HepG2 (cell line): ENCODE measurements at regions of chr17 and their contacts with region 1.

Region 1: DNA sequence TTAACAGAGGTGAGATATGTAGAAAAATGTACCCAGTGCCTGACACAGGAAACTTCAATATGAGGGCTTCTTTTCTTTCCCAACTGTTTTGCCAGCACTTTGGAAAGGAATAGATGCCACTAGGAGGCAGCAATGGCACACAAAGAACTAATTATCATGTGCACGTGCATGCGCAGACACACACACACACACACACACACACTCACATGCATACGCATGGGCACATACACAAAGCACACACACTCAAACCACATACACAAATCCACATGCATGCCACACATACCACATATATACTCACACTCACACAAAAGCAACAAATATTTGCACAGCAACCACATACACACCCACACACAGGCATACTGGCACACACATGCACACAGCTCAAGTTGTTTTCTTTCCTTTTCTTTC is 8.8 kb upstream of the CEP112 start:
- DNase-seq: peak; percentile 87
- ATAC-seq: peak; percentile 49
- H3K4me3 ChIP-seq: peak overlapping the region in 1 of 3 experiments; percentile 5; a peak in 1 of 6 replicates
- H3K27ac ChIP-seq: no peak overlapping the region
- H3K4me1 ChIP-seq: peaks cover 24% of the 10 kb centered on the region
- H3K27me3 ChIP-seq: no peaks in the 10 kb centered on the region
- CTCF ChIP-seq: peak; percentile 99
- EP300 ChIP-seq: no peak
- POLR2A ChIP-seq: no peak
- RAD21 ChIP-seq: peak; percentile 94

Region 2: GRCh38 chr17:66255112-66255511 is 54.4 kb after region 1 on chr17:
- CTCF ChIA-PET with region 1: interaction called, 3 read pairs
- POLR2A ChIA-PET with region 1: no interaction called
- in situ Hi-C with region 1: no loop called
- intact Hi-C with region 1: loop called (anchors 2 kb)
- DNase-seq: peak; percentile 87
- ATAC-seq: peak; percentile 92
- H3K4me3 ChIP-seq: no peak overlapping the region
- H3K27ac ChIP-seq: no peak overlapping the region
- H3K4me1 ChIP-seq: peaks cover 5% of the 10 kb centered on the region; the same call in 1 of the 2 replicates
- H3K27me3 ChIP-seq: no peaks in the 10 kb centered on the region
- CTCF ChIP-seq: peak; percentile 93
- EP300 ChIP-seq: no peak
- POLR2A ChIP-seq: no peak
- RAD21 ChIP-seq: peak; percentile 92

Region 3: DNA sequence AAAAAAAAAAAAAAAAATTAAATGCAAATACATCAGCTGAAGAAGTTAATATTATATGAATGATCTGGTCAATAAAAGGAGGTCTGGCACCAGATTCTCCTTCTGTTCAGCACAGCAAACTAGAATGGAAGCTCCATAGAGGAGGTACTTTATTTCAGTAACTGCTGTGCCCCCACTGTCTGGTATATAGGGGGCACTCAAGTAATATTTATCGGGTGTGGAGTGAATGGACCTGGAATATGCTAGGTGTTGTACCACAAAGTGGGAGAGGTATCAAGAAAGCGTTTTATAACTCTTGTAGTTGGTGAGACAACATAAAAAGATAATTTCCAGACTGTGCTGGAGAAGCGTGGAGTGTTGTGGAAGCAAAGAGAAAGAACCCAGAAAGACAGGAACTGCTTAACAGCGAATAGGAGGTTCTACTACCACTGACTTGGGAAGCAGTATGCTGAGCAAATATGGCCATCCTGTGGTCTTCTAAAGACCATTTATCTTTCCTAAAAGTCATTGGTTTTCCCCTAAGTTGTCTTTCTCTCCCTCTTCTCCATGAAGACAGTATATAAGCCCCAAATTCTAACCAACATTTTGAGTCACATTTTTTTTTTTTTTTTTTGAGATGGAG is 89.5 kb after region 1 on chr17:
- CTCF ChIA-PET with region 1: no interaction called
- POLR2A ChIA-PET with region 1: no interaction called
- in situ Hi-C with region 1: no loop called
- intact Hi-C with region 1: no loop called
- DNase-seq: peak; percentile 53
- ATAC-seq: peak; percentile 90
- H3K4me3 ChIP-seq: no peak overlapping the region
- H3K27ac ChIP-seq: no peak overlapping the region
- H3K4me1 ChIP-seq: peaks cover 23% of the 10 kb centered on the region
- H3K27me3 ChIP-seq: no peaks in the 10 kb centered on the region
- CTCF ChIP-seq: peak; percentile 70
- EP300 ChIP-seq: no peak
- POLR2A ChIP-seq: no peak
- RAD21 ChIP-seq: peak; percentile 67

Region 4: GRCh38 chr17:66426397-66427033 is 225.8 kb after region 1 on chr17:
- CTCF ChIA-PET with region 1: interaction called, 7 read pairs
- POLR2A ChIA-PET with region 1: no interaction called
- in situ Hi-C with region 1: no loop called
- intact Hi-C with region 1: loop called (anchors 5 kb)
- DNase-seq: peak; percentile 66
- ATAC-seq: peak; percentile 93
- H3K4me3 ChIP-seq: no peak overlapping the region
- H3K27ac ChIP-seq: peak overlapping the region; percentile 1
- H3K4me1 ChIP-seq: peaks cover 38% of the 10 kb centered on the region
- H3K27me3 ChIP-seq: no peaks in the 10 kb centered on the region
- CTCF ChIP-seq: peak; percentile 83
- EP300 ChIP-seq: peak in 1 of 2 experiments; percentile 14; a peak in 1 of 4 replicates
- POLR2A ChIP-seq: no peak
- RAD21 ChIP-seq: peak; percentile 79

Region 5: GRCh38 chr17:66625311-66625775 is 424.7 kb after region 1 on chr17:
- CTCF ChIA-PET with region 1: no interaction called
- POLR2A ChIA-PET with region 1: no interaction called
- in situ Hi-C with region 1: no loop called
- intact Hi-C with region 1: loop called (anchors 1 kb)
- DNase-seq: peak; percentile 41
- ATAC-seq: peak; percentile 81
- H3K4me3 ChIP-seq: no peak overlapping the region
- H3K27ac ChIP-seq: no peak overlapping the region
- H3K4me1 ChIP-seq: peaks cover 22% of the 10 kb centered on the region
- H3K27me3 ChIP-seq: no peaks in the 10 kb centered on the region
- CTCF ChIP-seq: peak; percentile 56
- EP300 ChIP-seq: no peak
- POLR2A ChIP-seq: no peak
- RAD21 ChIP-seq: peak; percentile 61; the same call in 1 of the 2 replicates

Region 6: GRCh38 chr17:66715745-66716156 is 515.1 kb after region 1 on chr17:
- CTCF ChIA-PET with region 1: no interaction called
- POLR2A ChIA-PET with region 1: no interaction called
- in situ Hi-C with region 1: no loop called
- intact Hi-C with region 1: loop called (anchors 1 kb)
- DNase-seq: peak; percentile 69
- ATAC-seq: peak; percentile 72
- H3K4me3 ChIP-seq: no peak overlapping the region
- H3K27ac ChIP-seq: no peak overlapping the region
- H3K4me1 ChIP-seq: peaks cover 36% of the 10 kb centered on the region
- H3K27me3 ChIP-seq: no peaks in the 10 kb centered on the region
- CTCF ChIP-seq: peak; percentile 87
- EP300 ChIP-seq: no peak
- POLR2A ChIP-seq: no peak
- RAD21 ChIP-seq: peak; percentile 60; the same call in 1 of the 2 replicates